ENCODE measurements at regions of chr5 and their contacts with region 1.

Region 1: GRCh38 chr5:173144200-173145176 is at the start of gene BNIP1:
- DNase-seq: peak; percentile 90
- ATAC-seq: peak; percentile 93
- H3K4me3 ChIP-seq: peak within 1 kb of the TSS; percentile 77 to 90 (median 85)
- H3K27ac ChIP-seq: peak within 1 kb of the TSS; percentile 70
- H3K4me1 ChIP-seq: peaks cover 19% of the 10 kb centered on the region
- H3K27me3 ChIP-seq: no peaks in the 10 kb centered on the region; a peak in 1 of 5 replicates
- CTCF ChIP-seq: peak; percentile 97
- EP300 ChIP-seq: peak; percentile 32 to 70; a peak in 2 of 4 replicates
- POLR2A ChIP-seq: peak; percentile 67 to 84
- RAD21 ChIP-seq: peak; percentile 54
- total RNA-seq, gene BNIP1: 16.9 and 20.6 TPM in 2 replicates

Region 2: GRCh38 chr5:173010547-173011464 is 133.7 kb before region 1 on chr5:
- CTCF ChIA-PET with region 1: interaction called, 9 read pairs
- POLR2A ChIA-PET with region 1: no interaction called
- in situ Hi-C with region 1: no loop called
- intact Hi-C with region 1: loop called (anchors 1 kb)
- DNase-seq: peak; percentile 67
- ATAC-seq: peak; percentile 84
- H3K4me3 ChIP-seq: no peak overlapping the region
- H3K27ac ChIP-seq: no peak overlapping the region
- H3K4me1 ChIP-seq: peaks cover 81% of the 10 kb centered on the region
- H3K27me3 ChIP-seq: no peaks in the 10 kb centered on the region
- CTCF ChIP-seq: peak; percentile 90
- EP300 ChIP-seq: no peak
- POLR2A ChIP-seq: no peak
- RAD21 ChIP-seq: peak; percentile 74; the same call in 1 of the 2 replicates

Region 3: DNA sequence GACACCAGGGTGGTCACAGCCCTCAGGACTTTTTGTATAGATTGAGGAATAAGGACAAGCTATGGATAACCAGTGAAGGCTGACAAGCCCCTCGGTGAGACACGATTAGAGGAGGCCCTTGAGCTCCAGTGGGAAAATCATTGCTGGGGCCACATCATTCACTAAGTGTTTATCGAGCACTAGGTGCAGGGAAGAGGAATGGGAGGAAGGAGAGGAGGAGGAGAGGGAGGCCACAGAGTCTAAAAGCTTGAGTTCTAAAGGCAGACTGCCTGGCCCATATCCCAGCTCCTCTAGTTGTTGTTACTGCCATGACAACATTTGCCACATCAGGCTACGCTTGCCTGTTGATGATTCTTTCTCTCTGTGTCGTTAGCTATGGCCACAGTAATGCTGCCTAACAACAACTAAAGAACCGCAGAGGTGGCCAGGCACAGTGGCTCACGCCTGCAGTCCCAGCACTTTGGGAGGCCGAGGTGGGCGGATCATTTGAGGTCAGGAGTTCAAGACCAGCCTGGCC is 52.9 kb after region 1 on chr5:
- CTCF ChIA-PET with region 1: no interaction called
- POLR2A ChIA-PET with region 1: no interaction called
- in situ Hi-C with region 1: no loop called
- intact Hi-C with region 1: loop called (anchors 2 kb)
- DNase-seq: no peak
- ATAC-seq: no peak
- H3K4me3 ChIP-seq: no peak overlapping the region
- H3K27ac ChIP-seq: no peak overlapping the region
- H3K4me1 ChIP-seq: peaks cover 42% of the 10 kb centered on the region
- H3K27me3 ChIP-seq: peaks cover 0 to 11% of the 10 kb centered on the region in 2 experiments; a peak in 2 of 5 replicates
- CTCF ChIP-seq: no peak
- EP300 ChIP-seq: no peak
- POLR2A ChIP-seq: no peak
- RAD21 ChIP-seq: no peak

Region 4: GRCh38 chr5:173352366-173353349 is 208.2 kb after region 1 on chr5:
- CTCF ChIA-PET with region 1: no interaction called
- POLR2A ChIA-PET with region 1: no interaction called
- in situ Hi-C with region 1: no loop called
- intact Hi-C with region 1: no loop called
- DNase-seq: no peak
- ATAC-seq: no peak
- H3K4me3 ChIP-seq: no peak overlapping the region
- H3K27ac ChIP-seq: no peak overlapping the region
- H3K4me1 ChIP-seq: no peaks in the 10 kb centered on the region
- H3K27me3 ChIP-seq: peaks cover 1 to 27% of the 10 kb centered on the region in 2 experiments; a peak in 3 of 5 replicates
- CTCF ChIP-seq: no peak
- EP300 ChIP-seq: no peak
- POLR2A ChIP-seq: no peak
- RAD21 ChIP-seq: no peak